HEK293 (cell line): ENCODE measurements at regions of chr9 and their contacts with region 1.

Region 1: DNA sequence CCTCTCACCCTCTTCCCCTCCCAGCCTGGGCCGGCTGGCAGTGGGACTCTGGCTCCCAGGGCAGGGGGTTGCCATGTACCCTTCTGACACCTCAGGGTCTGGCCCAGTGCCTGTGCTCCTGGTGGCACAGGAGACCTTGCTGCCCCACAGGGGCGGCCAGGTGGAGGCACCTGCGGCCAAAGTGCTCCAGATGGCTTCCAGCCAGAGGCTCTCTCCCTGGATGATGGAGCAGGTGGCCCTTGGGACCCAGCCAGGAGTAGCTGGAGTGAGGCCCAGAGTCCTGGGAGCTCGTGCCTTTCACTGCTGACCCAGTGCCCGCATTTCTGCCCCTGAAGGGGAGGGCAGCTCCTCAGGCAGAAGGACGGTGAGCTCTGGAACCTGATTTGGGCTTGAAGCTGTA is 87.3 kb downstream of the NTNG2 start:
- H3K4me3 ChIP-seq: no peak overlapping the region
- H3K27ac ChIP-seq: no peak overlapping the region
- H3K4me1 ChIP-seq: no peaks in the 10 kb centered on the region; the same call in 1 of the 2 replicates
- CTCF ChIP-seq: no peak

Region 2: GRCh38 chr9:131762356-131762932 is 486.7 kb before region 1 on chr9:
- CTCF ChIA-PET with region 1: interaction called, 57 read pairs
- POLR2A ChIA-PET with region 1: no interaction called
- H3K4me3 ChIP-seq: no peak overlapping the region
- H3K27ac ChIP-seq: no peak overlapping the region
- H3K4me1 ChIP-seq: no peaks in the 10 kb centered on the region
- CTCF ChIP-seq: peak; percentile 99

Region 3: GRCh38 chr9:132221941-132222340 is 27.2 kb before region 1 on chr9:
- CTCF ChIA-PET with region 1: no interaction called
- POLR2A ChIA-PET with region 1: no interaction called
- H3K4me3 ChIP-seq: no peak overlapping the region
- H3K27ac ChIP-seq: no peak overlapping the region
- H3K4me1 ChIP-seq: no peaks in the 10 kb centered on the region
- CTCF ChIP-seq: no peak

Region 4: GRCh38 chr9:132584601-132585560 is 335.8 kb after region 1 on chr9:
- CTCF ChIA-PET with region 1: no interaction called
- POLR2A ChIA-PET with region 1: no interaction called
- H3K4me3 ChIP-seq: no peak overlapping the region
- H3K27ac ChIP-seq: no peak overlapping the region
- H3K4me1 ChIP-seq: no peaks in the 10 kb centered on the region
- CTCF ChIP-seq: no peak